ENCODE measurements at regions of chr6 and their contacts with region 1.

Region 1: GRCh38 chr6:89940225-89941027 is 46.2 kb downstream of the GJA10 start:
- DNase-seq: peak; percentile 76

Region 2: GRCh38 chr6:89494131-89494796 is 446.2 kb before region 1 on chr6:
- in situ Hi-C with region 1: no loop called
- DNase-seq: no peak

Region 3: DNA sequence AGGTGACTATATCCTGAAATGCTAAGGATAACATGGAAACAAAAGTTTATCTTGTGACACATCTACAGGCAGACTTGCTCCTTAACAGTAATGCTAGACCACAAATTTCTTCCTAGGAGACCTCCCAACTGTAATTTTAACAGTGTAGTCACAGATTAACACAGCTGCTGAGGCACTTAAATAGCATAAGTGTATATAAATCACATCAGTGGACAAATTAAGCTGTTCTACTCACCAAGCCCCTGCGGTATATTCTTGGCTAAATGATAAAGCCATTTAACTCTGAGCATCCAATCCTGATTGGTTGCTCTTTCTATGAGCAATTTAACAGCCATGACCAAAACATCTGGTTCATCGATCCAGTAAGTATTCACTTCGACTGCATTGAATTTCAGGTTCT is 228.6 kb before region 1 on chr6:
- in situ Hi-C with region 1: no loop called
- DNase-seq: no peak

Region 4: DNA sequence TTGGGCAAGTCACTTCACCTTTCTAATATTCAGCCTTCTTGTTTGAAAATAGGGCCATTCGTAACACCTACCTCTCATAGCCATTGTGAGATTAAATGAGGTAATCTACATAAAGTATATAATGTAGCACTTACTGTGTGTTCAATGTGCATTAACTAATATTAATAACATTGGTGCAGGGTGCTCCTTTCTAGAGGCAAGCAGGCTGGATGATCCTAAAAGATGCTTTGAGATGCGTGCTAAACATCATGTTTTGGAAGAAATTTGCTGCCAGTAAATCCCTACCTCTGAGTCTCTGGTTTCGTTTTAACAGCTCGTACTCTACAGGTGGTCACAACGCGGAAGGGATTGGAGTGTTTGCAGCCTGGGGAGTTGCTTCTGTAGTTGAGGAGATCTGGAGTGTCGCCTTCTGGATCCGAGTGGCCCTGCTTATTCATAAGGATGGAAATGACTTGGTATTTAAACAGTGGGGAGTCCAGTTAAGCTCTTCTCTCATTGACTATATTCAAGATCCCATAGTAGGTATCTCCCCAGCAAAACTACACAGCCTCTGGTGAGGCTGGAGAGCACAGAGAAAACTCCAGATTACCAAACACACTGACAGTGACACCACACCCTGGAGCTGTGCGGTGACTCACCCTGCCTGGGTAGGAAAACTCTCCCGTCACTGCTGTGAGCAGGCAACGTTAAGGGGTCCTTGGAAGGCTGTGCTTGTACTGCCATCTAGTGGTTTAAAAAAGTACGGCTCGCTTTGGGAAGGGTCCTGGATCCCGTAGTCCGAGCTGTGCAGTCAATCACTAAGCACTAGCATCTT is 538.6 kb after region 1 on chr6:
- in situ Hi-C with region 1: loop called (anchors 10 kb)
- DNase-seq: peak; percentile 87